GM18951 (cell line): ENCODE measurements at regions of chr2 and their contacts with region 1.

Region 1: GRCh38 chr2:49490710-49491109 is 336.4 kb upstream of the FSHR start:
- POLR2A ChIP-seq: no peak

Region 2: GRCh38 chr2:48946449-48947048 is 544.2 kb before region 1 on chr2:
- in situ Hi-C with region 1: loop called (anchors 25 kb)
- POLR2A ChIP-seq: no peak